ENCODE measurements at regions of chr1 and their contacts with region 1.

Region 1: DNA sequence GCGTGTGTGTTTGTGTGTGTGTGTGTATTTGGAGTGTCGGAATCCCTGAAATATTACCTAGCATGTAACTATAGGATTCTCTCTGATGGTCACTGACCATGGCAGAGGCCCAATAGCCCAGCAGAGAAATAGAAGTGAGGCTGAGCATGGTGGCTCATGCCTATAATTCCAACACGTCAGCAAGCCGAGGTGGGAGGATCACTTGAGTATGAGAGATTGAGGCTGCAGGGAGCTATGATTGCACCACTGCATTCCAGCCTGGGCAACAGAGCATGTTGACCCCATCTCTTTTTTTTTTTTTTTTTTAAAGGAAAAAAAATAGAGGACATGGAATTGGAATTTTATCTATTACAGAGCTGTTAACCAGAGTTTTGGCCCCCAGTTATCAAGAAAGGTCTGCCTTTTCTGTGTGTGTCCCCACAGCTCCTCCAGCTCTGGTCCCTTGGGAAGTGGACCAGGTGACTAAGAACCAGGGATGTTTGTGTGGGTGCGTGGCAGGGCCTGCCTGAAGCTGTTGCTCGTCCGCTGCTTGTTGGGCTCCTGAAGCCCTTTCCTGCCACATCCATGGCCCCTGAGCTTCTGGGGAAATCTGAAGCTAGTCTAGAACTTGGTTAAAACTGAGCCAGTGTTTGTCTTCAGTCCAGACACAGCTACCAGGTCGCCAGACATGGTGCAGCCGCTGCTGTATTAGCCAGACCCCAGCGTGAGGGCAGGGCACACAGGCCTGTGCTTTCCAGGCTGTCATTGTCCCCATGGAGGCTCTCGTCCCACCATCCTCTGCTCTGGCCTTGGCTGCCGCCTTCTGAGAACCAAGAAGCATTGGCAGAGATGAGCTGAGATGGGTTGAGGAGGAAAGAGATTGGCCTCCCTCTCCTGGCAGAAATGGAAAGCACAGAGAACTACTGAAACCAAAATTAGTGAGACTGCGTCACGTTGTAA is 25.5 kb downstream of the CAPN9 start:
- DNase-seq: no peak
- ATAC-seq: peak; percentile 84
- H3K4me3 ChIP-seq: no peak overlapping the region
- H3K27ac ChIP-seq: no peak overlapping the region
- H3K4me1 ChIP-seq: no peaks in the 10 kb centered on the region
- H3K27me3 ChIP-seq: no peaks in the 10 kb centered on the region

Region 2: DNA sequence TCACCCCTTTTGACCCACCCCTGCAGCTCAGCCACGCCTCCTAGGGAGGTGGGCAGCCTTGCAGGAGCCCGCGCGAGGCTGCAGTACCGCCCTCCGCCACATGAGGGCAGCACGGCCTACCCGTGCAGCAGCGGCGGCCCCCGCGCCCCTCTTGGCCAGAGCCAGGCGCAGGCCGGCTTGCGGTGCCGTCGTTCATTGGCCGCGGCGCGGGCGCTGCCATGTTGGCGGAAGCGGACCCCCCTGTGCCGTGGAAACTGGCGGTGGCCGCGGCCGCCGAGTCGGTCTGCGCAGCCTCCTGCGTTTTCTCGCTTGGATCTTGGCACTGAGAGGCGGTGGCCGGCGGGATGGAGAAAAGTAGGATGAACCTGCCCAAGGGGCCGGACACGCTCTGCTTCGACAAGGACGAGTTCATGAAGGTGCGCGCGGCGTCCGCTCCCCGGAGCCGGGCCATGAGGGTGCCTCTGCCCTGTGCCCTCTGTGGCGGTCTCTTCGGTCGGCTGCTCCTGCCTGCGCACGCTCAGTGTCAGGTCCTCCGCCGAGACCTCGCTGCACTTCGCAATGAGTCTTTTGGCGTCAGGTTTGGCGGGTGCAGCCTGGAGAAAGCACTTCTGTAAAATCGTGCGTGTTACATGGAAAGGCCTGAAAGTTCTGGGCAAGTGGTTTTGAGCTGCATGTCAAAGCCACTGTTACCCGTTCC is 130.3 kb before region 1 on chr1 and contains the start of gene COG2:
- intact Hi-C with region 1: loop called in 1 of 2 experiments (anchors 2 kb)
- DNase-seq: peak; percentile 97 to 99
- ATAC-seq: peak; percentile 100
- H3K4me3 ChIP-seq: peak within 1 kb of the TSS; percentile 71 to 76
- H3K27ac ChIP-seq: peak within 1 kb of the TSS; percentile 36 to 46
- H3K4me1 ChIP-seq: peaks cover 0 to 7% of the 10 kb centered on the region in 2 donors
- H3K27me3 ChIP-seq: no peaks in the 10 kb centered on the region
- total RNA-seq, gene COG2: 18.1 to 23.1 TPM

Region 3: DNA sequence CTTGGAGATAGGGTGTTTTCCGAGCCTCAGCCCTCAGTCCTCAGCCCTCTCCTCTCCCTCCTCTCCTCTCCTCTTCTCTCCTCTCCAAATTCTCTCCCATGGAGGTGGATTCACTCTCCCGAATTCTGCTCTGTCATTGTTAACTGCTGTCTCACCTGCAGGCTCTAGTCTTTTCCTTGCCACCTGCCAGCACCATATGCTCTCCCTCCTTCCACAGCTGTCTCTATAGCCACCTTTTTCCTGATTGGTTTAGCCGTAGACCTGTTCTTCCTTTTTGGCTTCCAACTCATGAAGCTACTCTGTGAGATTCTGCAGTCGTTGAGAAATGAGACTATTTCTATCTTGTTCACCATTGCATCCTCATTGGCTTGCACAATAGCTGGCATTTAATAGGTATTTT is 110.8 kb before region 1 on chr1:
- intact Hi-C with region 1: loop called in 1 of 2 experiments (anchors 10 kb)
- DNase-seq: no peak
- ATAC-seq: no peak
- H3K4me3 ChIP-seq: no peak overlapping the region
- H3K27ac ChIP-seq: no peak overlapping the region
- H3K4me1 ChIP-seq: no peaks in the 10 kb centered on the region
- H3K27me3 ChIP-seq: no peaks in the 10 kb centered on the region